CD8-positive, alpha-beta memory T cell (primary cell): ENCODE measurements at regions of chr12 and their contacts with region 1.

Region 1: DNA sequence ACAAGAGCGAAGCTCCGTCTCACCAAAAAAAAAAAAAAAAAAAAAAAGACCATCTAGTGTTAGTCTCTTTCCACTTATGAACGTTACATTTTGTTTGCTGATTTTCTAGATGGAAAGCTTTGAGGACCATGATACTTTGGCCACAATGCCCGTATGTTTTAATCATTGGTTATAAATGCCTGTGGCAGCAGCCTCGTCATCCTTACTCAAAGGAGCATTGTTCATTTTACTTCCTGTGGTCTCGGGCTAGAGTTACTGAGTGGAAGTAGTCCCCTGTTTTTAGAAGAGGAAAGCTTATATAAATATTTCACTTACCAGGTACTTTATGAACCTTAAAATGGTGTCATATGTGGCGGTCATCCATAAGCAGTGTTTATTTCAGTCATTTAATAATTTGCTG is 359.9 kb downstream of the AEBP2 start:
- DNase-seq: no peak
- H3K4me3 ChIP-seq: no peak overlapping the region
- H3K4me3 Mint-ChIP-seq: no peak overlapping the region
- H3K27ac ChIP-seq: no peak overlapping the region
- H3K27ac Mint-ChIP-seq: peak overlapping the region in 1 of 8 donors; percentile 35
- H3K4me1 ChIP-seq: no peaks in the 10 kb centered on the region
- H3K4me1 Mint-ChIP-seq: peaks cover 10 to 21% (median 14%) of the 10 kb centered on the region in 3 donors
- H3K27me3 ChIP-seq: no peaks in the 10 kb centered on the region
- H3K27me3 Mint-ChIP-seq: peaks cover 4 to 8% of the 10 kb centered on the region in 2 donors

Region 2: GRCh38 chr12:19783547-19784444 is 15.4 kb before region 1 on chr12:
- CTCF ChIA-PET with region 1: no interaction called
- POLR2A ChIA-PET with region 1: interaction called, 11 read pairs
- DNase-seq: no peak
- H3K4me3 ChIP-seq: no peak overlapping the region
- H3K4me3 Mint-ChIP-seq: no peak overlapping the region
- H3K27ac ChIP-seq: no peak overlapping the region
- H3K27ac Mint-ChIP-seq: no peak overlapping the region
- H3K4me1 ChIP-seq: no peaks in the 10 kb centered on the region
- H3K4me1 Mint-ChIP-seq: no peaks in the 10 kb centered on the region
- H3K27me3 ChIP-seq: no peaks in the 10 kb centered on the region
- H3K27me3 Mint-ChIP-seq: peaks cover 11 to 12% of the 10 kb centered on the region in 2 donors

Region 3: DNA sequence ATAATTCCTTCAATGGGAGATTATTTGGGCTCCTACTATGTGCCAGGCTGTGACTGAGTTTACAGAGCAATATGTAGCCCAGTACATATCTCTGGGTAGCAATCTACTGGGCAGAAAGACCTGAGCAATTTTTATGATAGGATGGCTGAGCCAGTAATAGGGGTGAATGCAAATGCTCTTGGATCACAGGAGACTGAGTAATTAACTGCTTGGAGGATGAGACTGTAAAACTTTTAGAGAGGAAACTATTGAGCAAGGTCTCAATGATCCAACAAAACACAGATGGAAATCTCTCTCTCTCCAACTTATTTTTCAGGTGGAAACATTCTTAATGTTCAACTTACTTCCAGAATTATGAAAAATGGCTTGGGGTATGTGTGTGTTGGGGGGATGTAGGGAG is 42.2 kb after region 1 on chr12:
- CTCF ChIA-PET with region 1: no interaction called
- POLR2A ChIA-PET with region 1: no interaction called
- DNase-seq: no peak
- H3K4me3 ChIP-seq: no peak overlapping the region
- H3K4me3 Mint-ChIP-seq: no peak overlapping the region
- H3K27ac ChIP-seq: no peak overlapping the region
- H3K27ac Mint-ChIP-seq: no peak overlapping the region
- H3K4me1 ChIP-seq: no peaks in the 10 kb centered on the region
- H3K4me1 Mint-ChIP-seq: no peaks in the 10 kb centered on the region
- H3K27me3 ChIP-seq: no peaks in the 10 kb centered on the region
- H3K27me3 Mint-ChIP-seq: peaks cover 0 to 5% of the 10 kb centered on the region in 2 donors